ENCODE measurements at regions of chr12 and their contacts with region 1.

Region 1: GRCh38 chr12:52032804-52033502 is 18.3 kb upstream of the NR4A1 start:
- DNase-seq: peak; percentile 90
- H3K4me3 Mint-ChIP-seq: peak overlapping the region; percentile 72
- H3K27ac Mint-ChIP-seq: peak overlapping the region; percentile 74
- H3K4me1 Mint-ChIP-seq: peaks cover 44% of the 10 kb centered on the region
- H3K27me3 Mint-ChIP-seq: peaks cover 15% of the 10 kb centered on the region

Region 2: DNA sequence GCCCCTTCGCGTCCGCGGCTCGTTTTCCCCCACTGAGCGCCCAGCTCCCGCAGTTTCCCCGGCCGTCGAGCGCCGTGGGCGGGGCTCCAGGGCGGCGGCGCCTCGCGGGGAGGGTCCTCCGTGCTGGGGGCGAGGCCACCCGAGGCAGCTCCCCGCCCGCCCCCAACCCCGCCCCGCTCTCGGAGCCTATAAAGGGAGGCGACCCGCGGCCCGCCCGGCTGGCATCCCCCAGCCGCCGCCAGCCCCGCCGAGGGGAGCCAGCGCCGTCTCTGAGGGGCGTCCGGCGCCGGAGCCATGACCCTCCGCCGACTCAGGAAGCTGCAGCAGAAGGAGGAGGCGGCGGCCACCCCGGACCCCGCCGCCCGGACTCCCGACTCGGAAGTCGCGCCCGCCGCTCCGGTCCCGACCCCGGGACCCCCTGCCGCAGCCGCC is 26.2 kb before region 1 on chr12 and contains the start of gene TAMALIN:
- intact Hi-C with region 1: loop called (anchors 1 kb)
- DNase-seq: peak; percentile 70
- H3K4me3 Mint-ChIP-seq: peak within 1 kb of the TSS; percentile 84
- H3K27ac Mint-ChIP-seq: peak within 1 kb of the TSS; percentile 67
- H3K4me1 Mint-ChIP-seq: peaks cover 13% of the 10 kb centered on the region
- H3K27me3 Mint-ChIP-seq: peaks cover 38% of the 10 kb centered on the region
- total RNA-seq, gene TAMALIN: 8.9 and 12.8 TPM in 2 replicates

Region 3: DNA sequence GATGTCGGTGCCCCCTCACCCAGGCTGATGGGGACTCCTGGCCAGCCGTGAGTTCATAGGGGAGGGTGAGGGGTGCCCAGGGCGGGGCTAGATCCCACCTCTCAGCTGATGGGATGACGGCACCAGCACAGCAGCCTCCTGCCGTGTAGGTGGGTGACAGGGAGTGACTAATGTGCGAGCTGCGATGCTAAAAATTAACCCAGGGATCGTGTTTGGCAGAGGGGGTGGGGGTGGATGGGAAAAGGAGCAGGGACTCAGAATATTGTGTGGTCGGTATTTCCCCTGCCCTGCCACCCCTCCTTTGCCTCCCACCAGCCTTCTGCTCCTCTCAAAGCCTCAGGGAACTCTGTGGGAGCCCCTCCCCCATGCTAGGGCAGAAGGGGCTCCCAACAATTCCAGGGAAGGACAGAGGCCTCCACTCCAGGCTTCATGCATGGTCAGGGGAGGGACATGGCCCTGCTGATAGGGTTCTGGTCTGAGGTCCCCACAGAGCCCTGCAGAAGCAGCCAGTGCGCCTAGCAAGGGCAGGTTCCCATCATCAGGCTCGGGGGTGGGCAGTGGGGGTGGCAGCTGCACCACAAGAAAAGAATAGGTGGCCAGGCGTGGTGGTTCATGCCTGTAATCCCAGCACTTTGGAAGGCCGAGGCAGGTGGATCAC is 13.7 kb before region 1 on chr12:
- intact Hi-C with region 1: no loop called
- DNase-seq: no peak
- H3K4me3 Mint-ChIP-seq: no peak overlapping the region
- H3K27ac Mint-ChIP-seq: no peak overlapping the region
- H3K4me1 Mint-ChIP-seq: peaks cover 25% of the 10 kb centered on the region
- H3K27me3 Mint-ChIP-seq: peaks cover 14% of the 10 kb centered on the region

Region 4: DNA sequence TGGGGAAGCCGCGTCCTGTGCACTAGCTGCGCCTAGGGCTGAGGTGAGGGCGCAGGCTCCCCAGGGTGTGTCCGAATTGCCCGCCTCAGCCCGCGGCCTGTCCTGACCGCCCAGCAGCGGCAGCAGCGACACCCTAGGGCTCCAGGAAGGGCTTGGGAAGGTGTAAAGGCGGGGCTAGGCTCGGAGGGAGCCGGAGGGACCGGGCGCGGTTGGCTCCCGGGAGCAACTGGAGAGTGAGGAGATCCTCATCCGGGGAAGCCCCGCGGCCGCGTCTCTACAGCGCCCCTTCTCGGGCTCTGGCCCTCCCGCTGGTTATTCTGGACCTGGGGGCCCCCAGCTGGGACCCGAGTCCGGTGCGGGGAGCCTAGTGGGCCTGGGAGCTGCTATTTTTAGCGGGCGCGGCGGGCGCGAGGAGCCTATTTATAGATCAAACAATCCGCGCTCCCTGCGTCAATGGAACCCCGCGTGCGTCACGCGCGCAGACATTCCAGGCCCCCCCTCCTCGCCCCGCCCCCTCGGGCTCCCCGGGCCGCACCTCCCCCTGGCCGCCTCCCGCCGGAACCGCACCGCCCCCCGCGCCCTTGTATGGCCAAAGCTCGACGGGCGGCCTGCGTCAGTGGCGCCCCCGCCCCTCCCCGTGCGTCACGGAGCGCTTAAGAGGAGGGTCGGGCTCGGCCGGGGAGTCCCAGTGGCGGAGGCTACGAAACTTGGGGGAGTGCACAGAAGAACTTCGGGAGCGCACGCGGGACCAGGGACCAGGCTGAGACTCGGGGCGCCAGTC is 18.0 kb after region 1 on chr12 and contains the start of gene NR4A1:
- intact Hi-C with region 1: loop called (anchors 1 kb)
- DNase-seq: peak; percentile 96
- H3K4me3 Mint-ChIP-seq: peak within 1 kb of the TSS; percentile 96
- H3K27ac Mint-ChIP-seq: peak within 1 kb of the TSS; percentile 92
- H3K4me1 Mint-ChIP-seq: peaks cover 42% of the 10 kb centered on the region
- H3K27me3 Mint-ChIP-seq: no peaks in the 10 kb centered on the region
- total RNA-seq, gene NR4A1: 52.7 and 60.3 TPM in 2 replicates

Region 5: DNA sequence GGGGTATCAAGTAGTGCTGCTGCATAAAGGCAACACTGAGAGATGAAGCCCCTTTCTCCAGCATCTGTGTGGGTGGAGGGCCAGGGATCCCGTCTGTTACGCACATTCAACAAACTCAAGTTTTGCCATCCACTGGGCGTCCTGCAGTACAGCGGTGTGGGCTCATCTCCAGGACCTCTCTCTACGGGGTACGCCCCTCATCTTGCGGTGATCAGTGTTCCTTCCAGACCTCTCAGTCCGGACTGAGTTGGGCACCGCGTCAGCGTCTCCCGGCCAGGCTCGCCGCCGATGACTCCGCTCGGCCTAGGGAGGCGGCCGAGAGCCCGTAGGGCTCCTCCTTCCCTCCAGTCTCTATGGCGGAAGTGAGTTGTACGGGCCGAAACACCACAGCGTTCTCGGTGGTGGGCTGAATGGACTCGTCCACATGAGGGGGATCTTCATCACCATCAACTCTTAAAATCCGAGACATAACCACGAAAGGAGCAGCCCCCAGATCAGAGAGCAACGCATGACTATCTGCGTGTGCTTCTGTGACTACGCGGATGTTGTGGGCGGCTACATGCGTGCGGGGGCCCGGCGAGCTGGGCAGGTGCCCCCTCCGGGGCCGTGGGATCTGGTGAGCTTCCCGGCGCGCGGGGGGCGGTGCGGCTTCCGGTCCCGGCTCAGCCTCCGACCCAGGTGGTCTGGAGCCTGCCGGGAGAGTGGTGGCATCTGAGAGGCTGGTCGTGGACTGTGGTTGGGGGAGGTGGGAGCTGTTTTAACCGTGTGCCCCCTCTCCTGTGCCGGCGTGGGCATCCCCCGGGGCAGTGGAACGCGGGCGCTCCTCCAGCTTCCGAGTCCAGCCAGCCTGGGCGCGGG is 36.6 kb after region 1 on chr12 and contains the start of gene ATG101:
- intact Hi-C with region 1: loop called (anchors 1 kb)
- DNase-seq: peak; percentile 84
- H3K4me3 Mint-ChIP-seq: peak within 1 kb of the TSS; percentile 96
- H3K27ac Mint-ChIP-seq: peak within 1 kb of the TSS; percentile 99
- H3K4me1 Mint-ChIP-seq: peaks cover 54% of the 10 kb centered on the region
- H3K27me3 Mint-ChIP-seq: peaks cover 2% of the 10 kb centered on the region
- total RNA-seq, gene ATG101: 56.2 and 63.3 TPM in 2 replicates

Region 6: DNA sequence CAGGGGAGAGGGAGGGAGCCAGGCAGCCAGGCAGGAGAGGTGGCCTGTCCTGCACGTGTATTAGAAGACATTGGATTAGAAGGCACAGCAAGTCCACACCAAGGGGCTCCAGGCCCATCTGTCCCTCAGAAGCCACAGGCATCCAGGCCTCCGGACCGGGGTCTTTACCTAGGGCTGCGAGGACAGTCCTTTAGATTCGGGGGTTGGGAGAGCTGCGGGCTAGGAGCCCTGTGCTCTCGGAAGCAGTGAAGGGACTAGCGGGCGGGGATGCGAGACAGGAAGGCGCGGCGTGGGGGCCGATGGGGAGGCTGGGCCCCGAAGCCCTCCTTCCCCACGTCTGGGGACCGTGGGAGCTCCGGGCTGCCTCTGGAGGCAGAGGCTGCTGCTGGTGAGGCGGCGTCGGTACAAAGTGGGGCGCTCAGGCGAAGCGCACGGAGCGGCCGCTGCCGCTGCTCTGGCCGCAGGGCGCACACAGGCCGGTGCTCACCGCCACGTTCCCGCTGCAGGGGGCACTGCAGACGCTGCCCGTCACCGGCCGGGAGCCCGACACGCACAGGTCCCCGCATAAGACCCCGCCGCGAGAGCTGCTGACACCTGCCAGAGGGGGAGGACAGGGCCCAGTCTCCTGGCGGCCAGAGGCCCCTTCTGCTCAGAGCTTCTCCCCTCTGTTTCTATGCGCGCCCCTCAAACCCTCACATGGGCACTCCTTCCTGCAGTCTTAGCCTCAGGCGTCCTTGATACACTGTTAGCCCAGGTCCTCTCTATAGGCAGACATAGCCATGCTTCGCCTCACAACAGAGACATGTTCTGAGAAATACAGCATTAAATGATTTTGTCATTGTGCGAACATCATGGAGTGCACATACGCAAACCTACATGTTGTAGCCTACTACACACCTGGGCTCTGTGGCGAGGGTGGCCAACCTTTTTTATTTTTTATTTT is 217.4 kb after region 1 on chr12:
- intact Hi-C with region 1: loop called (anchors 5 kb)
- DNase-seq: no peak
- H3K4me3 Mint-ChIP-seq: peak overlapping the region; percentile 48
- H3K27ac Mint-ChIP-seq: peak overlapping the region; percentile 72
- H3K4me1 Mint-ChIP-seq: peaks cover 79% of the 10 kb centered on the region
- H3K27me3 Mint-ChIP-seq: peaks cover 1% of the 10 kb centered on the region